Activated CD8-positive, alpha-beta T cell treated with anti-CD3 and anti-CD28 coated beads, Interleukin-2, amount 10 ng/mL, durations not matched to agents 7 days and 5 days (primary cell): ENCODE measurements at regions of chr16 and their contacts with region 1.

Region 1: GRCh38 chr16:3029537-3030402 is 5.9 kb downstream of the THOC6 start:
- DNase-seq: peak; percentile 68
- ATAC-seq: peak; percentile 58
- H3K4me3 Mint-ChIP-seq: peak overlapping the region; percentile 65
- H3K27ac Mint-ChIP-seq: peak overlapping the region; percentile 65
- H3K4me1 Mint-ChIP-seq: peaks cover 44% of the 10 kb centered on the region
- H3K27me3 Mint-ChIP-seq: peaks cover 40% of the 10 kb centered on the region

Region 2: GRCh38 chr16:2990891-2991290 is 38.9 kb before region 1 on chr16:
- CTCF ChIA-PET with region 1: no interaction called
- POLR2A ChIA-PET with region 1: no interaction called
- DNase-seq: no peak
- ATAC-seq: no peak
- H3K4me3 Mint-ChIP-seq: no peak overlapping the region
- H3K27ac Mint-ChIP-seq: no peak overlapping the region
- H3K4me1 Mint-ChIP-seq: no peaks in the 10 kb centered on the region
- H3K27me3 Mint-ChIP-seq: no peaks in the 10 kb centered on the region

Region 3: DNA sequence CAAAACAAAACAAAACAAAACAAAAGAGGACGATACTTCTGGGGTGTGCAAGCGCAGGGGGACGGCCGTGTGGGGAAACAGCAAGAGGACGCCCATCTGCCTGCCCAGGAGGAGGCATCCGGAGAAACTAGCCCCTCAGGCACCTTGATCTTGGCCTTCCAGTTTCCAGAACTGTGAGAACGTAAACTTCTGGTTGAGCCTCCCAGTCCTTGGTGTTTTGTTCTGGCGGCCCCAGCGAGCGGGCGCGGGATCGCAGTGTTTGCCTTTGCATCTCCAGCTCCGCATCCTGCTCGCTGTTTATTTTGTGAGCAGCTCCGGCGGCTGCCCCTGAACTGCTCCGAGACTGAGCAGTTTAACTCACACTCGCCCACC is 15.6 kb after region 1 on chr16:
- CTCF ChIA-PET with region 1: interaction called, 270 read pairs
- POLR2A ChIA-PET with region 1: interaction called, 15 read pairs
- DNase-seq: peak; percentile 73
- ATAC-seq: peak; percentile 56
- H3K4me3 Mint-ChIP-seq: peak overlapping the region; percentile 83
- H3K27ac Mint-ChIP-seq: peak overlapping the region; percentile 78
- H3K4me1 Mint-ChIP-seq: peaks cover 44% of the 10 kb centered on the region
- H3K27me3 Mint-ChIP-seq: peaks cover 33% of the 10 kb centered on the region

Region 4: DNA sequence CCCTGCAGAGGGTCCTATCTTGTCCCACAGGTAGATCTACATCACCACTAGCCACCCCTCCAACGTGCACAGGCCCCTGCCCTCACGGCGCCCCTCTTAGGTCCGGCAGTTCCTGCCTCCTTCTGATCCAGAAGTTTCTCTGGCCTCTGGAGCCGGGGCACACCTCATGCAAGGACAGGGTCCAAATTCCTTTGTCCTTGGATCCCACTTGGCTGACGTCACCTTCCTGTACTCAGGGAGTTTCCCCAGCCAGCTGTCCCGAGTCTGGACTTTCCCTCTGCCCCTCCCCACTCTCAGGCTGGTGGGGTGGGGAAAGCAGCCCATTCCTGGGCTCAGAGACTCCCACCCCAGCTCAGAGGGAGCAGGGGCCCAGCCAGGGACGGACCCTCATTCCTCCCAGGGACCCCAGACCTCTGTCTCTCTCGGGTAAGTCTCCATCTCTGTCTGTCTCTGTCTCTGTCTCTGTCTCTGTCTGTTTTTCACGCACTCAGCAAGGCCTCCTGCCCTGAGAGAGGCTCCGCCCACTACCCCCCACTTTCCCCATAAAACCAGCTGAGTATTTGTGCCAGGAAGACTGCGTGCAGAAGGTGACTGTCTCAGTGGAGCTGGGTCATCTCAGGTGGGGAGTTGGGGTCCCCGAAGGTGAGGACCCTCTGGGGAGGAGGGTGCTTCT is 35.4 kb after region 1 on chr16 and contains the start of gene IL32:
- CTCF ChIA-PET with region 1: interaction called, 41 read pairs
- POLR2A ChIA-PET with region 1: interaction called, 3 read pairs
- DNase-seq: peak; percentile 78
- ATAC-seq: peak; percentile 52
- H3K4me3 Mint-ChIP-seq: peak within 1 kb of the TSS; percentile 100
- H3K27ac Mint-ChIP-seq: peak within 1 kb of the TSS; percentile 99
- H3K4me1 Mint-ChIP-seq: peaks cover 74% of the 10 kb centered on the region
- H3K27me3 Mint-ChIP-seq: no peaks in the 10 kb centered on the region
- total RNA-seq, gene IL32: 1,836 to 1,884 TPM